ENCODE measurements at regions of chr20 and their contacts with region 1.

Region 1: GRCh38 chr20:58888521-58889333 is 36.2 kb downstream of the GNAS start:
- DNase-seq: peak; percentile 93
- ATAC-seq: peak; percentile 42
- H3K4me3 ChIP-seq: peak overlapping the region; percentile 26 to 90 (median 71)
- H3K4me3 Mint-ChIP-seq: peak overlapping the region; percentile 85
- H3K27ac ChIP-seq: peak overlapping the region; percentile 64 to 88
- H3K27ac Mint-ChIP-seq: peak overlapping the region; percentile 88
- H3K4me1 ChIP-seq: peaks cover 25 to 30% of the 10 kb centered on the region in 2 donors
- H3K4me1 Mint-ChIP-seq: peaks cover 29% of the 10 kb centered on the region
- H3K27me3 ChIP-seq: no peaks in the 10 kb centered on the region
- H3K27me3 Mint-ChIP-seq: no peaks in the 10 kb centered on the region
- CTCF ChIP-seq: no peak

Region 2: DNA sequence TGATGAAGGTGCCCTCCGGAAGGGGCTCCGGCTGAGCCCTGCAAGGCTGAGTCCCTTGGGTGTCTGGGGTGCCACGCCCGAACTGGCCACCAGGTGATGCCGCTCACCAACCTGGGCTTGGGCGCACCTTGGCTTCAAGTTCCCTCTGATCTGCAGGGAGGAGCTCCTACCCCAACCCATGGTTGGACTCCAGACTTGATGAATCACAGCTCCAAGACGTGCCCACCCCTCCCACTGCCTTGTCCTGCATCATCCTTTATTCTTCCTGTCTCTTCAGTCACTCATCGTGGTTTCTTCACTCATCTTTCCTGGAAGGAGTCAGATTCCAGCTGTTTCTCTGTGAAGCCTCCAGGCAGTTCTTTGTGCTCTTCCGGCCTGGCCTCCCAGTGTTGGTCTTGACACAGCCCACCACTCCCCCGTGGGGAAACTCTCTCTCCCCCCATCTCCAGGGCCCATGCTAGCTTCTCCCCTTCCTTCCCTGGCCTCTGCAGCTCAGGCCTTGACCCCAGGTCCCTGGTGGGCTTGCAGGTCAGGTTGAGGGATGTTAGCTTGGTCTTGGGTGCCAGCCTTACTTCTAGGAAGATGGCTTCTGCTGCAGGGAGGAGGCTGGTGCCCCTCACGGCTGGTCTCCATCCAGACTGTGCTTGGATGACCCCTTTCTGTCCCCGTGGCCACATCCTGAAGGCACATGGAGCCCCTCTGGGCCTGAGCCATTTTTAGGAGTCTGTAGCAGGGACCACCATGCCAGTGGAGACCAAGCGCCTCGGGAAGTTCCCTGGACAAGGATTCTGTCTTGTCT is 1265.9 kb before region 1 on chr20:
- CTCF ChIA-PET with region 1: no interaction called
- POLR2A ChIA-PET with region 1: no interaction called
- intact Hi-C with region 1: loop called (anchors 10 kb)
- DNase-seq: peak; percentile 69
- ATAC-seq: no peak
- H3K4me3 ChIP-seq: no peak overlapping the region
- H3K4me3 Mint-ChIP-seq: peak overlapping the region; percentile 13
- H3K27ac ChIP-seq: no peak overlapping the region
- H3K27ac Mint-ChIP-seq: peak overlapping the region; percentile 80
- H3K4me1 ChIP-seq: peaks cover 54 to 59% of the 10 kb centered on the region in 2 donors
- H3K4me1 Mint-ChIP-seq: peaks cover 65% of the 10 kb centered on the region
- H3K27me3 ChIP-seq: no peaks in the 10 kb centered on the region
- H3K27me3 Mint-ChIP-seq: no peaks in the 10 kb centered on the region
- CTCF ChIP-seq: peak; percentile 82

Region 3: DNA sequence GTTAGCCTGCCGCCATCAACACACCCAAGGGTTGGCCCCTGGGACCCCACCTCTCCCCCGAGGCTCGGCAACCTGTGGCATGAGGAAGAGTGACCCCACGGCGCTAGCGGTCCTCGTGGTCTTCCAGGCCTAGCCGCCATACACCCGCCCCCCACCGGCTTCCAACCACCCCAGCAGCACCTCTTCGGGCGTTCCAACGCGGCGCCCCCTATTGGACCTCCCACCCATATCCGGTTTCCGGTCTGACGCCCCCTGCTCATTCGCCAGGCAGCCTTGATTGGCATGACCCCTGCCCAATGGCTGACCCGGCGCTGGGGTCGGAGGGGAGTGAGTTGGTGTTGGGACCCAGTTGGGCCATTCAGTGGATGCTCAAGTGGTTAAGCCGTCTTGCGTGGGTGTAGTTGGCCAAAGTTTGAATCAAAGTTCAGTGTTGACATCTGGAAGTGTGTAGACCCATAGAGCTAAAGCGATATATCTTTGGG is 38.0 kb before region 1 on chr20 and contains the start of gene GNAS-AS1:
- CTCF ChIA-PET with region 1: no interaction called
- POLR2A ChIA-PET with region 1: no interaction called
- intact Hi-C with region 1: loop called (anchors 2 kb)
- DNase-seq: peak; percentile 76
- ATAC-seq: peak; percentile 89
- H3K4me3 ChIP-seq: peak within 1 kb of the TSS; percentile 31 to 58 (median 48)
- H3K4me3 Mint-ChIP-seq: peak within 1 kb of the TSS; percentile 93
- H3K27ac ChIP-seq: no peak within 1 kb of the TSS
- H3K27ac Mint-ChIP-seq: no peak within 1 kb of the TSS
- H3K4me1 ChIP-seq: peaks cover 35 to 51% of the 10 kb centered on the region in 2 donors
- H3K4me1 Mint-ChIP-seq: peaks cover 36% of the 10 kb centered on the region
- H3K27me3 ChIP-seq: peaks cover 0 to 66% (median 16%) of the 10 kb centered on the region in 4 experiments
- H3K27me3 Mint-ChIP-seq: peaks cover 42% of the 10 kb centered on the region
- CTCF ChIP-seq: no peak
- total RNA-seq, gene GNAS-AS1: 1.5 and 2.1 TPM in 2 replicates

Region 4: DNA sequence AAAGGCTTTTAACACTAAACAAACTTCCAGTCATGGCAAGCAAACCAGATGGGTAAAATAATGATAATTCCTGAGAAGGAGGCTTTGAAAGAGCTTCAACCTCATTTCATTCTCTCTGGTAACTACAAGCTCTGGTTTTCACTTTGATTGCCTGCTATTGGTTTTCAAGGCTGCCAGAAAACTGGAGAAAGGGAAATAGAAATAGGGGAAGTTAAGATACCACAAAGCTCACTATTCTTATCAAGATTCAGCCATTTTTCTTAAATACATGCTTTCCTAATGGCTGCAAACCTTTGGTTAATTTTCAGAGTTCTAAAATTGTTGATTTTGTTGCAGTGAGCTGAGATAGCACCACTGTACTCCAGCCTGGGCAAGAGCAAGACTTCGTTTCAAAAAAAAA is 49.8 kb after region 1 on chr20:
- CTCF ChIA-PET with region 1: no interaction called
- POLR2A ChIA-PET with region 1: no interaction called
- intact Hi-C with region 1: no loop called
- DNase-seq: peak; percentile 39
- ATAC-seq: no peak
- H3K4me3 ChIP-seq: peak overlapping the region in 1 of 5 experiments; percentile 10
- H3K4me3 Mint-ChIP-seq: no peak overlapping the region
- H3K27ac ChIP-seq: no peak overlapping the region
- H3K27ac Mint-ChIP-seq: no peak overlapping the region
- H3K4me1 ChIP-seq: peaks cover 10 to 12% of the 10 kb centered on the region in 2 donors
- H3K4me1 Mint-ChIP-seq: peaks cover 16% of the 10 kb centered on the region
- H3K27me3 ChIP-seq: no peaks in the 10 kb centered on the region
- H3K27me3 Mint-ChIP-seq: no peaks in the 10 kb centered on the region
- CTCF ChIP-seq: no peak

Region 5: GRCh38 chr20:58980700-58981627 is 92.2 kb after region 1 on chr20 and contains the start of gene NELFCD:
- CTCF ChIA-PET with region 1: no interaction called
- POLR2A ChIA-PET with region 1: interaction called, 6 read pairs
- intact Hi-C with region 1: loop called (anchors 1 kb)
- DNase-seq: peak; percentile 93
- ATAC-seq: peak; percentile 93
- H3K4me3 ChIP-seq: peak within 1 kb of the TSS; percentile 79 to 91 (median 80)
- H3K4me3 Mint-ChIP-seq: peak within 1 kb of the TSS; percentile 96
- H3K27ac ChIP-seq: peak within 1 kb of the TSS; percentile 71 to 76
- H3K27ac Mint-ChIP-seq: peak within 1 kb of the TSS; percentile 94
- H3K4me1 ChIP-seq: peaks cover 24 to 47% of the 10 kb centered on the region in 2 donors
- H3K4me1 Mint-ChIP-seq: peaks cover 43% of the 10 kb centered on the region
- H3K27me3 ChIP-seq: no peaks in the 10 kb centered on the region
- H3K27me3 Mint-ChIP-seq: no peaks in the 10 kb centered on the region
- CTCF ChIP-seq: no peak
- total RNA-seq, gene NELFCD: 107 and 108 TPM in 2 replicates

Region 6: GRCh38 chr20:59032023-59032712 is 143.4 kb after region 1 on chr20 and contains the start of gene ATP5F1E:
- CTCF ChIA-PET with region 1: interaction called, 7 read pairs
- POLR2A ChIA-PET with region 1: interaction called, 9 read pairs
- intact Hi-C with region 1: loop called (anchors 1 kb)
- DNase-seq: peak; percentile 98
- ATAC-seq: peak; percentile 97
- H3K4me3 ChIP-seq: peak within 1 kb of the TSS; percentile 68 to 82 (median 80)
- H3K4me3 Mint-ChIP-seq: peak within 1 kb of the TSS; percentile 97
- H3K27ac ChIP-seq: peak within 1 kb of the TSS; percentile 84 to 91
- H3K27ac Mint-ChIP-seq: peak within 1 kb of the TSS; percentile 98
- H3K4me1 ChIP-seq: peaks cover 27 to 37% of the 10 kb centered on the region in 2 donors
- H3K4me1 Mint-ChIP-seq: peaks cover 45% of the 10 kb centered on the region
- H3K27me3 ChIP-seq: no peaks in the 10 kb centered on the region
- H3K27me3 Mint-ChIP-seq: no peaks in the 10 kb centered on the region
- CTCF ChIP-seq: no peak
- total RNA-seq, gene ATP5F1E: 51.0 and 55.0 TPM in 2 replicates

Region 7: DNA sequence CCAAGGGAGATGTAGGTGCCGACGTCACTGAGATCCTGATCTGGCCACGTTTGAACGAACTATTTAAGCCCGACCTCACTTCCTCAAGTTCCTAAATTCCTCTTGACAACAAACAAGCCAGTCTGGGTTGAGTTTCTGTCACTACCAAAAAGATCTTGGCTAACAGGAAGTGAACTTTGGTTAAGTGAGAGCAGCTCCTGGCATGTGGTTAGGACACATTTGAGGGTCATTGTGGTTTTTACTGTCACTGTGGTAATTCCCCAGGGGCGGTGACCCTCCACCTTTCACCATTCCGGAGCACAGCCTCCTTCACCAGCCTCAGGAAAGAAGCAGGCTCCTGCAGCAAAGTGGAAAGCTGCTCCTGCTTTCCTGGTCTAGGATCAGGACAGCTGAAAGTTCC is 231.8 kb after region 1 on chr20:
- CTCF ChIA-PET with region 1: no interaction called
- POLR2A ChIA-PET with region 1: interaction called, 12 read pairs
- intact Hi-C with region 1: no loop called
- DNase-seq: peak; percentile 48
- ATAC-seq: no peak
- H3K4me3 ChIP-seq: no peak overlapping the region
- H3K4me3 Mint-ChIP-seq: peak overlapping the region; percentile 91
- H3K27ac ChIP-seq: no peak overlapping the region
- H3K27ac Mint-ChIP-seq: peak overlapping the region; percentile 98
- H3K4me1 ChIP-seq: peaks cover 58 to 60% of the 10 kb centered on the region in 2 donors
- H3K4me1 Mint-ChIP-seq: peaks cover 68% of the 10 kb centered on the region
- H3K27me3 ChIP-seq: no peaks in the 10 kb centered on the region
- H3K27me3 Mint-ChIP-seq: no peaks in the 10 kb centered on the region
- CTCF ChIP-seq: no peak

Measured in B cell (primary cell).